Activated CD8-positive, alpha-beta memory T cell treated with anti-CD3 and anti-CD28 coated beads, Interleukin-2, amount 10 ng/mL, durations not matched to agents 7 days and 5 days (primary cell): ENCODE measurements at regions of chr3 and their contacts with region 1.

Region 1: DNA sequence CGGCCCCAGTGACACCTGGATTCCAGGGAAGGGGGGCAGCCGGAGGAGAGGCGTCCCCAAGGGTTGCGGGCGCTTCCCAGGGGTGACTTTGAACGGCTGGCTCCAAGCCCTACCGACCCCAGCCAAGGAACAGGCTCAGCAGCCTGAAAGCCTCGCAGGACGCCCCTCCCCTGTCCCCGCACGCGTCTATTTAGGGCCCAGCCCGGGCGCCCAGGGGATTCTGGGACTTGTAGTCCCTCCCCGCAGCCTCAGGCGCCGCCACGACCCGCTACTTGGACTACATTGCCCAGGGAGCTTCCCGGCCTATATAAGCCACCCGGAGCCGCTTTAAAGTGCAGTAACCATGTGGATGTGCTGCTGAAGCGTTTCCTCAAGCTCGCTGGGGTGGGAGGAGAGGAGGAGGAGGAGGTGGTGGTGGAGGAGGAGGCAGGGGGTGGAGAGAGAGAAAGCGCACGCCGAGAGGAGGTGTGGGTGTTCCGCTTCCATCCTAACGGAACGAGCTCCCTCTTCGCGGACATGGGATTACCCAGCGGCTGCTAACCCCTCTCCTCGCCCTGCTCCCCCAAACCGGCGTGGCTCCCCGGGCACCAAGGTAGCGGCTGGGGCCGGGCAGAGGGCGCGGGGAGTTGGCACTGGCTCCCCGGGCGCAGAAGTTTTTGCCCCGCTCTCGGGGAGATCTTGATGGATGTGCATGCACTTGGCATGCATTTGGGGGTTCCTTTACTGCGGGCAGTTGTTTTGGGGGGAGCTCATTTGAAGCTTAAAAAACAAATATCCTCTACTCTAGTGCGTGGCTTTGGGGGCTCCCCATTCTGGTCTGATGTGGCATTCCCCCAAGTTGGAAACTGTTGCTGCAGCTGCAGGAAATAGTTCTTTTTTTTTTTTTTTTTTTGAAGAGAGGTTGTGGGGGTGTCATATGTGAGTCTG is at the start of gene ITPR1:
- DNase-seq: peak; percentile 99
- ATAC-seq: peak; percentile 89
- H3K4me3 Mint-ChIP-seq: peak within 1 kb of the TSS; percentile 92
- H3K27ac Mint-ChIP-seq: peak within 1 kb of the TSS; percentile 86
- H3K4me1 Mint-ChIP-seq: peaks cover 43% of the 10 kb centered on the region
- H3K27me3 Mint-ChIP-seq: peaks cover 9% of the 10 kb centered on the region
- total RNA-seq, gene ITPR1: 109 to 116 TPM

Region 2: GRCh38 chr3:4394048-4394447 is 99.2 kb before region 1 on chr3:
- CTCF ChIA-PET with region 1: interaction called, 11 read pairs
- DNase-seq: peak; percentile 84
- ATAC-seq: peak; percentile 88
- H3K4me3 Mint-ChIP-seq: peak overlapping the region; percentile 17
- H3K27ac Mint-ChIP-seq: peak overlapping the region; percentile 92
- H3K4me1 Mint-ChIP-seq: peaks cover 52% of the 10 kb centered on the region
- H3K27me3 Mint-ChIP-seq: no peaks in the 10 kb centered on the region

Region 3: DNA sequence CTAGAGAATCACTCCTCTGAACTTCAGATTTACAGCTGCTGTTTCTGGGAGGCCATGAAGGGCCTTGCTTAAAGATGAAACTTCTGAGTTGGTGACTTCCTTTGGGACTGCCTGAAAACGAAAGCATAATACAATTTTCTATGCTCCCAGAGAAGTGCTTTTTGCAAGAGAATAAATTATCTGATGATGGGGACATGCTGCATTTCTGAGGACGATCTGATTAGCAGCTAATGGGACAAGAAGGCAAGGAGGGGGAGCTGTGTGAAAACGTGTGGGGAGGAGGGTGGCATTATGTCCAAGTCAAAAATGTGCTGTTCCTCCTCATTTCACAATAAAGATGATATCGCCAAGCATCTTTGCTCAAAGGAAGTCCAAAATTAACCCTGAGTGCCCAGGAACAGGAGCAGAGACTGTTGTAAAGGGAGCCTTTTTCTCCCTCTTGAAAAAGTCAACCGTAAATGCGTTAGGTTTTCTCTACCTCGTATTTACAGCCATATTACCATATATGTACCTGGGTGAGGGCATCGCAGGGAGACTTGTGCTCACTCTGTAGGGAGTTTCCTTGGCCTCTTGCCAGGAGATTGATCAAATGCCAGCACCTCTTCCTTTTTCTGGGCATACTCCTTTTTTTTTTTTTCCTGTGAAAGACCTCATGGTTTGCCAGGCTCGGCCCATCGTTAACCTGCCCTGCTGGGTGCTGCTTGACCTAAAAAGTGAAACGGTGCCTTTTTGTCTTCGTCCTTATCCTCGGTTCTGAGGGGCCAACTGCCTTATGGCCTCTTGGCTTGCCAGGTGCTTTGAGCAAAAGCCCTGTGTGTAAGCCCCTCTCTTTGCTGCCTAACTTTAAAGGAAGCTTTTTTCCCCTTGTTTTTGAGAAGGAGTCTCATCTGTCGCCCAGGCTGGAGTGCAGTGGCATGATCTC is 11.3 kb after region 1 on chr3:
- CTCF ChIA-PET with region 1: interaction called, 31 read pairs
- DNase-seq: no peak
- ATAC-seq: peak; percentile 77
- H3K4me3 Mint-ChIP-seq: peak overlapping the region; percentile 77
- H3K27ac Mint-ChIP-seq: peak overlapping the region; percentile 98
- H3K4me1 Mint-ChIP-seq: peaks cover 58% of the 10 kb centered on the region
- H3K27me3 Mint-ChIP-seq: no peaks in the 10 kb centered on the region